Right cardiac atrium (tissue), 5 donors: ENCODE measurements at regions of chr20 and their contacts with region 1.

Region 1: GRCh38 chr20:58890518-58891085 is 38.1 kb downstream of the GNAS start:
- DNase-seq: peak; percentile 86 to 95 (median 93)
- ATAC-seq: peak; percentile 83 to 86
- H3K4me3 ChIP-seq: peak overlapping the region; percentile 100
- H3K27ac ChIP-seq: peak overlapping the region; percentile 76
- H3K4me1 ChIP-seq: no peaks in the 10 kb centered on the region
- H3K27me3 ChIP-seq: no peaks in the 10 kb centered on the region

Region 2: DNA sequence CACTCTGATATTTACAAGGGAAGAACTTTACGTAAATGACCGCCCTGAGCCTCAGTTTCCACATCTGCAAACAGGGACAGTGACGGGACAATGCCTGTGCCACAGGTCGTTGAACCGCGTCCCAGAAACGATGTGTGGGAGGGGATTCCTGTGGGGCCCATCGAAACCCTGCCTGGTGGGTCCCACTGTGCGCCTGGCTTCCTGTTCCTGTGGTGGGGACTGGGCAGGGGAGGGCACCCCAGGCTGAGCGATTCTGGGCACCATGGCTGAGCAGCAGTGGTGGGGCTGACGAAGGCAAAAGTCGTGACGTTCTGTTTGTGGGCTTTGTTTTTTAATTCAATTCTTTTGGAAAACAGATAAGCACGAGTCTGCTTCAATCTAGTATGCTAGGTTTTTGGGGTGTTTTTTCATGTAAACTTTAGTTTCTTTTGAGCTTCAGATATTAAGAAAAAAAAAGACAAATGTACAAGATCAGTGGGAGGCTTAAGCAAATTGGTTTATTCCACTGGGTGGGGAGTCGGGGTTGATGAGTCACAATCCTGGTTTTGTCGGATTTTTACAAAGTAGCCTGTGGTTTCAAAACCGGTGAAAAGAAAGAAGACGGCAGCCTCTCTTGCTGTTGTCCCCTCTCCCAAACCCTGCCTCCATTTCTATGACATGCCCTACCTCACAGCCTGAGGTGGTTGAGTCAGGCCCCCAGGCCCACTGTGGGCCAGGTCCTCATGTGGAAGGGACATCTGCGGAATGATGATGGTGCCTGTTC is 80.3 kb before region 1 on chr20:
- intact Hi-C with region 1: no loop called
- DNase-seq: no peak
- ATAC-seq: no peak
- H3K4me3 ChIP-seq: no peak overlapping the region
- H3K27ac ChIP-seq: no peak overlapping the region
- H3K4me1 ChIP-seq: no peaks in the 10 kb centered on the region
- H3K27me3 ChIP-seq: no peaks in the 10 kb centered on the region

Region 3: GRCh38 chr20:58980700-58981627 is 90.4 kb after region 1 on chr20 and contains the start of gene NELFCD:
- intact Hi-C with region 1: loop called in 3 of 4 experiments (anchors 2 to 10 kb)
- DNase-seq: peak; percentile 90 to 97 (median 96)
- ATAC-seq: peak; percentile 93 to 96
- H3K4me3 ChIP-seq: peak within 1 kb of the TSS; percentile 99
- H3K27ac ChIP-seq: peak within 1 kb of the TSS; percentile 87
- H3K4me1 ChIP-seq: peaks cover 11% of the 10 kb centered on the region
- H3K27me3 ChIP-seq: no peaks in the 10 kb centered on the region
- total RNA-seq, gene NELFCD: 26.4 to 33.0 (median 28.9) TPM

Region 4: GRCh38 chr20:59010995-59011873 is 120.6 kb after region 1 on chr20:
- intact Hi-C with region 1: loop called in 1 of 4 experiments (anchors 10 kb)
- DNase-seq: peak in 2 of 3 donors; percentile 51 to 79
- ATAC-seq: peak; percentile 16 to 43
- H3K4me3 ChIP-seq: no peak overlapping the region
- H3K27ac ChIP-seq: peak overlapping the region; percentile 33
- H3K4me1 ChIP-seq: peaks cover 10% of the 10 kb centered on the region
- H3K27me3 ChIP-seq: no peaks in the 10 kb centered on the region

Region 5: DNA sequence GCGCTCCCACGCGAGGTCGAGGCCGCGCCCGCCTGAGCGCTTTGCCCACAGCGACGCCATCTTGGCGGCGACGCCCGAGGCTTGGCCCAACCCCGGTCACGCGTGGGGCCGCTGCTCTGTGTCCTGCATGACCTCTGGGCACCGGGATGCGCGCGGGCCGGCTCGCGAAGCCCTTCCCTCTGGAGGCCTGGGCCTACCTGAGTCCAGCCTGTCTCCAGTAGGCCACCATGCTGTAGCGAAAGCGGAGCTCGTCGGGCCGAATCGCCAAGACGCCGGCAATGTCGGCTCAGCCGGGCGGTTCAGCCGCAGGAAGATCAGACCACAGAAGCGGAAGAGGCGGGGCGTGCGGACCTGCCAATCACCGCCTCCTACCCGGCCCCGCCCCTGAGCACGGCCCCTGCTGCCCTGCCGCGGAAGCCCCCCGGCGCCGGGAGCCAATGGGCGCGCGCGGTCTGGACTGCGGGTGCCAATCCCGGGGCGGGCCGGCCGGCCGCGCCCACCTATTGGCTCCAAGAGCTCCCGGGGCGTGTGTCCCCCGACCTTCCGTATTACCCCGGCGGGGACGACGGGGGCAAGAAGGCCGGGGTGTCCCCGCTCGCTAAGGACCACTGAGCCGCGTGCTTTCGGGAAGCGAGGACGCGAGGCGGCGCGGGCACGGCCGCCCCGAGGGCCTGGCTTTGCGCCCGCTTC is 141.6 kb after region 1 on chr20 and contains the start of gene ATP5F1E:
- intact Hi-C with region 1: loop called in 2 of 4 experiments (anchors 5 kb)
- DNase-seq: peak; percentile 97 to 99 (median 99)
- ATAC-seq: peak; percentile 100
- H3K4me3 ChIP-seq: peak within 1 kb of the TSS; percentile 63
- H3K27ac ChIP-seq: peak within 1 kb of the TSS; percentile 85
- H3K4me1 ChIP-seq: peaks cover 10% of the 10 kb centered on the region
- H3K27me3 ChIP-seq: no peaks in the 10 kb centered on the region
- total RNA-seq, gene ATP5F1E: 109 to 131 (median 121) TPM

Region 6: GRCh38 chr20:59042796-59043660 is 152.4 kb after region 1 on chr20:
- intact Hi-C with region 1: loop called in 1 of 4 experiments (anchors 10 kb)
- DNase-seq: peak; percentile 95 to 98 (median 98)
- ATAC-seq: peak; percentile 98 to 99
- H3K4me3 ChIP-seq: peak overlapping the region; percentile 77
- H3K27ac ChIP-seq: peak overlapping the region; percentile 72
- H3K4me1 ChIP-seq: peaks cover 3% of the 10 kb centered on the region
- H3K27me3 ChIP-seq: no peaks in the 10 kb centered on the region